ENCODE measurements at regions of chr14 and their contacts with region 1.

Region 1: GRCh38 chr14:21092273-21093011 is 6.0 kb downstream of the ZNF219 start:
- DNase-seq: peak; percentile 74 to 83
- ATAC-seq: peak; percentile 52 to 87
- H3K4me3 ChIP-seq: no peak overlapping the region
- H3K27ac ChIP-seq: peak overlapping the region in 1 of 2 experiments; percentile 49; a peak in 3 of 6 replicates
- H3K4me1 ChIP-seq: peaks cover 41% of the 10 kb centered on the region
- CTCF ChIP-seq: peak; percentile 99
- EP300 ChIP-seq: no peak
- POLR2A ChIP-seq: no peak
- RAD21 ChIP-seq: peak; percentile 92 to 95

Region 2: GRCh38 chr14:20998664-20999366 is 93.6 kb before region 1 on chr14 and contains the start of gene SLC39A2:
- CTCF ChIA-PET with region 1: interaction called, 15 read pairs
- POLR2A ChIA-PET with region 1: no interaction called
- DNase-seq: no peak
- ATAC-seq: peak in 1 of 2 experiments; percentile 65; a peak in 2 of 6 replicates
- H3K4me3 ChIP-seq: no peak within 1 kb of the TSS
- H3K27ac ChIP-seq: no peak within 1 kb of the TSS
- H3K4me1 ChIP-seq: no peaks in the 10 kb centered on the region
- CTCF ChIP-seq: no peak
- EP300 ChIP-seq: no peak
- POLR2A ChIP-seq: no peak
- RAD21 ChIP-seq: no peak
- polyA plus RNA-seq, gene SLC39A2: 0.09 TPM in 1 of 2 replicates, not detected in the other

Region 3: DNA sequence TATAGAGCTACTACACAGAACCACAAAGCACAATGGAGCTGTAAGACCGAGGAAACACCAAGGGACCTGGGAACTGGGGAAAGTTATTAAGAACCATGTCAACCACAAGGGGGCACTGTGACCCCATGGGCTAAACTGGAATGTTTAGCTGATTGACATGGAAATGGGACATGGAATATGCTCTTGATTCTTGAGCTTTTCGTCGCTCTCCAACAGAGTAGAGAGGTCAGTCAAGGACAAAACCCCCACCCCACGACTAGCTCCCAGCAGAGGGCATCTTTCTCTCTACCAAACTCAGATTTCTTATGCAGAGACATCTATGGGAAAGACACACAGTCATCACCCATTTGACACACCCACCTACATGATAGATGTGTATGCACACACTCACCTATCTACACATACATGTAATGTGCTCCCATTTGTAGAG is 77.7 kb before region 1 on chr14:
- CTCF ChIA-PET with region 1: interaction called, 212 read pairs
- POLR2A ChIA-PET with region 1: interaction called, 4 read pairs
- DNase-seq: peak; percentile 76 to 86
- ATAC-seq: peak; percentile 92 to 95
- H3K4me3 ChIP-seq: no peak overlapping the region
- H3K27ac ChIP-seq: no peak overlapping the region
- H3K4me1 ChIP-seq: no peaks in the 10 kb centered on the region
- CTCF ChIP-seq: peak; percentile 93
- EP300 ChIP-seq: no peak
- POLR2A ChIP-seq: no peak
- RAD21 ChIP-seq: peak; percentile 90 to 96

Region 4: DNA sequence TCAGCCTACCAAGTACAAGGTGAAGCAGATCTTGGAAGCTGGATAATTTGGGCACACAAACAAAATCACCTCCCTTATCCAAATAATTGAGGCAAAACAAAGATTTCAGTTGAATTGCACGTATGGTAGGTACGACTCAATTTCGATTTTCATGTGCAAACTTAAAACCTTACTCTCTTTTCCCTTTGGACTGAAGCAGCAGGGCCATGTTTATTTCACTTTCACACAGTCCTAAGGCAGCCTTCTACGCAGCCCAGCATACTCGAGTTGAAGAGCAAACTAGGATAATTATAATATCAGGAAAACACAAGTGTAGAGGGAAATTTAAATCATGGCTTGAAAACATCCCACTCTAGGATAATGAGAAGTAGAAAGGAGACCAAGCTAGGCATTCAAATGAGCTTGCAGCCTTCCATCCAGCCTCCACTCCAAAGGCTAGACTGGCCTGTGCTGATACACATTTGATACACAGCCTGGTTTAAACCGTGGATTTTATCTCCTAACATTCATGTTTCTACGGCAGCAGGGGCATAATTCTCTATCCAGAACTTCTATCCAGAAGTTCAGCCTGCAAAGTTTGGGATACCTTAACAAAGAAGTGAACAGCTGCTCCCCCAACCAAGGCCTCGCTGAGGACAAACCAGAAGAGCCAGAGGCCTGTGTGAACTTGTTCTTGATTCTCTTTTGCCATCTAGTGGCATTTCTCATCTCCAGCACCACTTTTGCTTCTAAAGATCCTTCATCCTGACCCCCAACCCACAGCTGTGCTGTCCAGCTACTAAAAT is 52.7 kb before region 1 on chr14:
- CTCF ChIA-PET with region 1: interaction called, 57 read pairs
- POLR2A ChIA-PET with region 1: no interaction called
- DNase-seq: peak; percentile 63 to 66
- ATAC-seq: peak; percentile 85 to 94
- H3K4me3 ChIP-seq: no peak overlapping the region
- H3K27ac ChIP-seq: no peak overlapping the region
- H3K4me1 ChIP-seq: no peaks in the 10 kb centered on the region
- CTCF ChIP-seq: peak; percentile 71
- EP300 ChIP-seq: no peak
- POLR2A ChIP-seq: no peak
- RAD21 ChIP-seq: peak; percentile 81 to 82

Region 5: DNA sequence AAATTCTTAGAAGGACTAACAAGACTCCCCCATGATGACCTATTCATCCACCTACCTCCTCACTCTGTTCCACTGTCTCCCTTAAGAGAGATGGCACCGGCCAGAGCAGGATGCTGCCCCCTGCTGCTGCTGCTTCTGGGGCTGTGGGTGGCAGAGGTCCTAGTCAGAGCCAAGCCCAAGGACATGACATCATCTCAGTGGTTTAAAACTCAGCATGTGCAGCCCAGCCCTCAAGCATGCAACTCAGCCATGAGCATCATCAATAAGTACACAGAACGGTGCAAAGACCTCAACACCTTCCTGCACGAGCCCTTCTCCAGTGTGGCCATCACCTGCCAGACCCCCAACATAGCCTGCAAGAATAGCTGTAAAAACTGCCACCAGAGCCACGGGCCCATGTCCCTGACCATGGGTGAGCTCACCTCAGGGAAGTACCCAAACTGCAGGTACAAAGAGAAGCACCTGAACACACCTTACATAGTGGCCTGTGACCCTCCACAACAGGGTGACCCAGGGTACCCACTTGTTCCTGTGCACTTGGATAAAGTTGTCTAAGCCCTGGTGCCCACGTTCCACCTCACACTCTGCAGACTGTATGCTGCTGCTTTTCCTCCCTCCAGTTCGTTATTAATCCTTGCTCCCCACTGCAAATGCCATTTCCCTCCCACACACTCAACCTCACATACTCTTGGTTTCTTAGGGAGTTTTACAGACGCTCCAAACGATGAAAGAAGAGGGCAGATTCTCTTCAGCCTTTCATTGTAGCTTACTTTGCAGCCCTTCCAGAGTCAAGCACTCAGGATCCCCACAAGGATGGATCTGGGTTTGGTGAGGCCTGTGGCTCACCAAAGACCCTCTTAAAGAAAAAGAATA is 34.4 kb before region 1 on chr14 and contains the start of gene RNASE8:
- CTCF ChIA-PET with region 1: interaction called, 29 read pairs
- POLR2A ChIA-PET with region 1: no interaction called
- DNase-seq: no peak
- ATAC-seq: peak in 1 of 2 experiments; percentile 46; a peak in 2 of 6 replicates
- H3K4me3 ChIP-seq: no peak within 1 kb of the TSS
- H3K27ac ChIP-seq: no peak within 1 kb of the TSS
- H3K4me1 ChIP-seq: peaks cover 29% of the 10 kb centered on the region
- CTCF ChIP-seq: no peak
- EP300 ChIP-seq: no peak
- POLR2A ChIP-seq: no peak
- RAD21 ChIP-seq: no peak
- polyA plus RNA-seq, gene RNASE8: not detected in 2 replicates

Region 6: DNA sequence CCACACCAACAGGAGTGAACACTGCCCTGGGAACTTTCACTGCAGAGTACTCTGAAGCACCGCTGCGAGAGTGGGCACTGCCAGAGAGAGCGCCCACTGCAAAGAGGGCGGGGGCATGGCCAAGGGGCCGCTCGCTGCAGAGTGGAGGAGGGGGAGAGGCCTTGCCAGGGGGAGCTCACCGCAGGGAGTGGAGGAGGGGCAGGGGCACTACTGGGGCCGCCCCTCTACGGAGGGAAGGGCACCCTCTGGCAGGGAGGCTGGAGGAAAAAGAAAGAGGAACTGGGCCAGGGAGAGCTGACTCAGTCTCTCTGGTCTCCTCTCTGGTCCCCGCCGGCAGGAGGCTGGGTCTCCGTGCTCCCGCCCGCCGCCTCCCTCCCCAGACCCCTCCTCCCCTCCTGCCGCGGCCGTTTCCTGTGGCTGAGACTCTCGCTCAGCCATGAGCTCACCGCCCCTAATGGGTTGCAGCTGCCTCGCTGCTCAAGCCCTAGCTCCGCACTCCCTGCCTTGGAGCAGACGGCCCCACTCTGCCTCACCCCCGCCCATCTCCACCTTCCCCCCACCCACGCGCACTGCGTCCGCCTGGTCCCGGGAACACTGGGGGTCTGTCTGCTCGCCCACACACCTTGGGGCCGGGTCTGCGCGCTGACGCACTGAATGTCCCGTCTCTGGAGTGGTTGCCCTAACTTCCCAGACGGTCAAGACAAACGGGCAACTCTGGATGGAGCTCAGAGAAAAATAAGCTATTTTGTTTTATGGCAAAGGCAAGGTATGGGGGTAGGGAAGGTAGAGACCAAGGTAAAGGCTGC is 21.0 kb before region 1 on chr14:
- CTCF ChIA-PET with region 1: interaction called, 369 read pairs
- POLR2A ChIA-PET with region 1: interaction called, 11 read pairs
- DNase-seq: peak; percentile 37 to 58
- ATAC-seq: peak; percentile 45 to 67
- H3K4me3 ChIP-seq: peak overlapping the region; percentile 79
- H3K27ac ChIP-seq: peak overlapping the region; percentile 83 to 95
- H3K4me1 ChIP-seq: peaks cover 23% of the 10 kb centered on the region
- CTCF ChIP-seq: no peak
- EP300 ChIP-seq: no peak
- POLR2A ChIP-seq: no peak; the same call in 1 of the 2 replicates
- RAD21 ChIP-seq: no peak

Region 7: DNA sequence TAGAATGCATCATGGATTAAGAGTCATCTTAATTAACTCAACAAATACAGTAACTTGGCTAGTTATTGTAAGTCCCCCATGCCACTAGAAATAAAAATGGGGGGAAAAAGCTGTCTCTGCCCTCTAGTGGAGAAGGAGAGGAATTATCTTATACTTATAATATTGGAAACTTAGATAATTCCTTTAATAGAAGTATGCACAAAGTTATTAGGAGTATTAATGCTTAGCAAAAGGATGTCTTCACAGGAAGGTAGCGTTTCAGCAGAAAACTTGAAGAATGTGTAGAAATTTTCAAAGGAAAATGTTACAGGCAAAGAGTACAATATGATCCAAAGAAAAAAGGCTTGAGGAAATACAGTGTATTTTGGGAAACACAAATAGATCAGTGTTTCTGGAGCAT is 43.6 kb after region 1 on chr14:
- CTCF ChIA-PET with region 1: interaction called, 11 read pairs
- POLR2A ChIA-PET with region 1: no interaction called
- DNase-seq: peak; percentile 20 to 50
- ATAC-seq: peak in 1 of 2 experiments; percentile 48; a peak in 1 of 6 replicates
- H3K4me3 ChIP-seq: no peak overlapping the region
- H3K27ac ChIP-seq: no peak overlapping the region
- H3K4me1 ChIP-seq: no peaks in the 10 kb centered on the region
- CTCF ChIP-seq: peak; percentile 75
- EP300 ChIP-seq: no peak
- POLR2A ChIP-seq: no peak
- RAD21 ChIP-seq: peak; percentile 43 to 50; a peak in 4 of 5 replicates

Measured in A549 (cell line).